ENCODE measurements at regions of chr3 and their contacts with region 1.

Region 1: DNA sequence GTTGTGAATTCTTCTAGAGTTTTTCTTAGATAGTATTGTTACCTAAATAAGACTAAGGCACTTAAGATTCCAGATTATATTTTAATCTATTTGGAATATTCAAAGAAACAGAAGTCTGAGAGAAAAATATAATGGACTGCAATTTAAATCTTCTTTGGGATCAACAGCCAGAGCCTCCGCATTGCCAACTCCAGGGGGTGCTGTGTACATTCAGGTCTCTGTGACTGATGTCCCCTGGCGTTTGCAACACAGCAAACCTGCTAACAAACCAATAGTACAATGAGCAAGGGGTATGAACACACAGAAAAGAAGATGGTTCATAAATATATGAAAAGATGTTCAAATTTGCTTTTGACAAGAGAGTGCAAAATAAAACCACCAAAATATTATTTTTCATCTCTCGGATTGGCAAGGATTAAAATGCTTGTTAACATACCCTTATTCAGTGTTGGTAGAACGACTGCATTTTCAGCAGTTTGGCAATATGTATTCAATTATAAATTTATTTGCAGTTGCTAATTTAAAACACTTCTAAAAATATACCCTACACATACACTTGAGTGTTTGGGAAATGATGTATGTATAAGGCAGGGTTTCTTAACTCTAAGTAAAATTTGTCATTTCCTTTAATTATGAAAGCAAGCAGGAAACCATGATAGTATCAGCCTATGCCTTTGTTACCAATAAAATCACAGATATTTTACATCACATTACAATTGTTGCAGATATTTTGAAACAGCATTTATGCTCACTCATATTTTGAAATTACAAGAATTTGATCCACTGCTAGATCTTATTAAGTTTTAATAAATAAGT is 16.1 kb upstream of the TM4SF1 start:
- DNase-seq: peak; percentile 54 to 85 (median 75)
- H3K4me3 ChIP-seq: no peak overlapping the region
- H3K27ac ChIP-seq: no peak overlapping the region
- H3K4me1 ChIP-seq: peaks cover 0 to 5% (median 0%) of the 10 kb centered on the region in 3 donors
- H3K27me3 ChIP-seq: no peaks in the 10 kb centered on the region
- CTCF ChIP-seq: peak; percentile 91

Region 2: DNA sequence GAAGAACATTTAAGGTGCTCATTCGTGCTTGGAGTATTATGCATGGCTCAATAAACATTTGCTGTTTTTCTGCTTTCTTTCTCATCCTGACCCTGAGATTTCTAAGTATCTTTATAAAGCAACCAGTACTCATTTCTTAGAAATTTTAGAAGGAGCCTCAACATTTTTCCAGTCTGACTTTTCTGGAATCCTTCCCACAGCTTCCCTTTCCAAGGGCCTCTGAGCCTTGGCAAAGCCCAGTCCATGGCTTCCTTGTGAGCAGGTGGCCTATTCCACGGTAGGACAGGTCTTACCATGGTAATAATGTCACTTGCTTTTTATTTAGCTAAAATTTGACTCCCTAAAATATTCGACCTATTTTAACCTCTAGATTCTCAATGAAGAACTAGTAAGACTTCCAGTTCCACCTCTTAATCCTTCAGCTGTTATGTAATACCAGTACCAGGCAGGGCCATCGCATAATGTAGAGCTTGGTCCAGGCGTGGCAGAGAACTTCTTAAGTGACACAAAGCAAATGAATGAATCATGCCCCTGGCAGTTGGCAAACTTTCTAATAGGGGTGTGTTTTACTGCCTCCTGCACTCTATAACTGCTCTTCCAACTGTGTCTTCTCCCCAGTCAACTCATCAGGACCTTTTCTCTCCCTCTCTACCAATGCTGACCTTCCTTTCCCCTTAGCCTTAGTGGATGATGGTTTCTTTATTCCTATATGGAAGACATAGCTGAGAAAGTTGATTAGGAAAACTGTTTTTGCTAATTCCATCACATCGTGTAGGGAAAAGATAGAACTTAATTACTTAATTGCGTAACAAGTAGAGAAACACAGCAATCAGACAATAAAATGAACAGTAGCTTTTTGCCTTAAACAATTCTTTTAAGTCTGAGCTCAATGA is 80.0 kb after region 1 on chr3:
- intact Hi-C with region 1: loop called (anchors 10 kb)
- DNase-seq: peak in 1 of 5 donors; percentile 23
- H3K4me3 ChIP-seq: no peak overlapping the region
- H3K27ac ChIP-seq: no peak overlapping the region
- H3K4me1 ChIP-seq: peaks cover 10 to 22% (median 15%) of the 10 kb centered on the region in 3 donors
- H3K27me3 ChIP-seq: no peaks in the 10 kb centered on the region
- CTCF ChIP-seq: no peak

Region 3: DNA sequence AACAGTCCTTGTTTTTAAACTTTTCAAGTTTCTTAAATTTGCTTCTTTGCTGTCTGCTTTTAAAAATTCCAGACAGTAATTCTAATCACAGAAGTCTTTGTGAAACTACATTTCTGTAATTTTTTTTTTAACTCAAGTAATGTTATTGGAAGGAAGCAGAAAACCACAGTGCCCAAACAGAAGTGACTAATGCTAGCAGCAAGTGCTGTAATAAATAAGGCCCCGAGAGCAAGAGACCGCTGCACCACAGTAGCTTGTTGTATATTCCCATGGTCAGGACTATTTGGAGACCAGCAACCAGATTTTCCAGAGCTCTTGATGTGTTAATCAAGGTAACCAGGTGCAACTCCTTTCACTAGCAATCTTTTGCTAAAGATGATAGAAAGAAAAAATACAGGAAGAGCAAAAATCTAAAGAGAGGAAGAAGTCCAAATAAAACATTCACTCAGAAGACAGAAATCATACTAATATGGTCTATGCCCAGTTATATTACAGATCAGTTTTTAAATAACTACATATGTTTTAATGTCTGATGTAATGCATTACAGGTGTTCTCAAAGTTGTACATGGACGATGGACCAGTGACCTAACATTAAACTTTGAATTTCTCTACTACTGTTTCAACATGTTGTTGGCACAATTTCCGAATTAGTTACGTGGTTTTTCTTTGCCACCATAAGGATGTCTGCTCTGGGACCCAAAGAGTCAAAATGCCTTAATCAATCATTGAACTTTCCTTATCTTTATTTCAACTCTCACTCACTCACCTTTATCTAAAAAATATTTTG is 227.9 kb after region 1 on chr3:
- intact Hi-C with region 1: no loop called
- DNase-seq: no peak
- H3K4me3 ChIP-seq: no peak overlapping the region
- H3K27ac ChIP-seq: no peak overlapping the region
- H3K4me1 ChIP-seq: peaks cover 0 to 10% (median 8%) of the 10 kb centered on the region in 3 donors
- H3K27me3 ChIP-seq: no peaks in the 10 kb centered on the region
- CTCF ChIP-seq: no peak